Psoas muscle (tissue), 8 donors: ENCODE measurements at regions of chr5 and their contacts with region 1.

Region 1: DNA sequence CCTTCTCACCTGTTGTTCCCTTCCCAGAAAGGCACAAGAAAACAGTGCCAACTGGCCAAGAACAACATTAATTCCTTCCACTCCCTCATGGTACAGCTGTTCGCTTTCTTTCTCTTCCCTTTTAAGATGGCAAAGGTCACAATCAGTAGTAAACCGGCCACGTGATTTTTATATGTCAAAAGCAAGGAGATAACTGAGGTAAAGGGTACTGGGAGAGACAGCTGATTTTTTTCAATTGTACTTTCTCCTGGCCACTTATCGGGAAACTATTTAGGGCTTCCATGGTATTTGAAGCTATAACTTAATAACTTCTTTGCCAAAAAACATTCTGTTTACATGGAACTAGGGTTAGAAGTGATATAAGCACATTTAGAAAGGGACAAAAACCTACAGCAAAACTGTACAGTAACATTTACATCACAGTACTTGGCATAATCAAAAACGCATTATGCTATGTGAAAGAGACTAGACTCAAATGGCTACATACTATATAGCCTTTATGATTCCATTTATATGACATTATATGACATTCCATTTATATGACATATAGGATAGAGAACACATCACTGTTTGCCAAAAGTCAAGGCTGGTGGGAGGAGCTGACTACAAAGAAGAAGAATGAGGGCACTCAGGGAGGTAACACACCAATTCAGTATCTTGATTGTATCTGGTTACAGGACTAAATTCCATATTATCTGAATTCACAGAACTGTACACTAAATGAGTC is 24.8 kb downstream of the PLPP1 start:
- DNase-seq: no peak
- ATAC-seq: peak in 3 of 4 donors; percentile 39 to 60 (median 60)
- H3K4me3 ChIP-seq: peak overlapping the region; percentile 24
- H3K27ac ChIP-seq: peak overlapping the region; percentile 62
- H3K4me1 ChIP-seq: peaks cover 46% of the 10 kb centered on the region
- H3K27me3 ChIP-seq: no peaks in the 10 kb centered on the region
- CTCF ChIP-seq: no peak

Region 2: DNA sequence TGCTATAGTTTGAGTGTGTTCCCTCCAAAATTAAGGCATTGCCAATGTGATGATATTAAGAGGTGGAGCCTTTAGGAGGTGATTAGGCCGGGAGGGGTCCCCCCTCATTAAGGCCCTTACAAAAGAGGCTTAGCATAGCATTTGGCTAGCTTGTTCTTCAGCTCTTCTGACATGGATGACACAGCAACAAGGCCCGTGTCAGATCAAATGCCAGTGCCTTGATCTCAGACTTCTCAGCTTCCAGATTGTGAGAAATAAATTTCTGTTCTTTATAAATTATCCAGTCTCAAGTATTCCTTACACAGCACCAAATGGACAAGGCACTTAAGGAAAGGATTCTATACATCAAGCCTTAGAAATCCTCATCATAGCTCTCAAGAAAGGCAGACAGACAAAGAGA is 170.4 kb after region 1 on chr5:
- intact Hi-C with region 1: loop called in 1 of 2 experiments (anchors 10 kb)
- DNase-seq: no peak
- ATAC-seq: peak in 3 of 4 donors; percentile 60 to 84 (median 76)
- H3K4me3 ChIP-seq: peak overlapping the region; percentile 51
- H3K27ac ChIP-seq: peak overlapping the region; percentile 58
- H3K4me1 ChIP-seq: peaks cover 24% of the 10 kb centered on the region
- H3K27me3 ChIP-seq: no peaks in the 10 kb centered on the region
- CTCF ChIP-seq: no peak